ENCODE measurements at regions of chr2 and their contacts with region 1.

Region 1: DNA sequence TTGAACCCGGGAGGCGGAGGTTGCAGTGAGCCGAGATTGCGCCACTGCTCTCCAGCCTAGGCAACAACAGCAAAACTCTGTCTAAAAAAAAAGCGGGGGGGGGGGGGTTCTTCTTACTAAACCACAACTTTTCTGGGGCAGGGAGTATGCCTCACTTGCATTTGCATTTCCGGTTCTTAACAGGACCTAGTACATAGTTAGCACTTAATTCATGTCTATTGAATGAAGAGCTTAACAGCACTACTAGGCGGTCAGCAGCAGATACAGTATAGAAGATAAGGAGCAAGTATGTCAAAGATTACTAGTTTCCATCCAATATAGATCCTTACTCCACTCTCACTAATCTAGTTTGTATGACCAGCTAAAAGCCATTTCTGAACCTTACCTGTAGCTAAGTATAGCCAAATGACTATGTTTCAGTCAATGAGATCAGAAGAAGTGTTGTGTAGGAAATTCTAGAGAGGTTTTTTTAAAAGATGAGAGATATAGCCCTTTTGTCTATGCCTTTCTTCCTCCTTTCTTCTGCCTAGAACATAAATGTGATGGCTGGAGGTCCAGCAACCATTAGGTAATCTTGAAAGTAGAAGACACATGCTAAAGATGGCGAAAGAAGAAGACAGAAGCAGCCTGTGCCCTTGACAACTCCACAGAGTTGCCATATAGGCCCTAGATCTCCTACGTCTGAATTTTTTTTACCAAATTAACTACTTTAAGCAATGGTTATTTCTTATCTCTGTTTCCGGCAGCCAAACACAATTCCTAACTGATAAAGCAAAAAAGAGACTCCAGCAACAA is 11.3 kb downstream of the HYCC2 start:
- DNase-seq: no peak
- H3K4me3 ChIP-seq: no peak overlapping the region
- H3K27ac ChIP-seq: no peak overlapping the region
- H3K4me1 ChIP-seq: no peaks in the 10 kb centered on the region
- H3K27me3 ChIP-seq: no peaks in the 10 kb centered on the region
- CTCF ChIP-seq: no peak
- EP300 ChIP-seq: no peak
- POLR2A ChIP-seq: no peak

Region 2: DNA sequence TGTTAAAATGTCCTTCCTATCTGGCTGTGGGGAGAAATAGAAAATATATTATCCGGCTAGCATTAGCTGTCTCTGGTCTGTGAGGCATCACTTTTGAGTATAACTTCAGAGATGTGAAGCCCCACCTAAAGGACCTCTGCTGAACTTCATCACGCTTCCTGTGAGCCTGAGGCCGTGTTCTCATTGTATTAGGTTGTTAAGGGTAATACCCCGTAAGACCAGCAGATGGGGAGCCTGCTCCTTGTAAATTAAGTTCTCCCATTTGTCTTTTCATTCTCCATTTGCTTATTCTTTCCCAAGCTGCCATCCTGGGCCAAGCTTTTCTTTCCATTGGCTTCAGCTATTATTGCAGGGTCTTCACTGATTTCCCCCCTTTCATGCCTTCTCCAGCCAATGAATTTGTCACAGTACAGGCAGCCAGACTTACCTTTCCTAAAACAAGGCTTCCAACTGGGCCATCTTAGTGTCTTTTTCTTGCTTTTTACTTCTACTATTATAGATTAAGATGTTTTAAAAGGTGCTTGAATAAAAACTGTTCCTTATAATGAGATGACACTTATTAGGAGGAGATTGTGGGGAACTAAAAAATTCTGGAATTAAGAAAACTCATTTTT is 158.6 kb before region 1 on chr2:
- intact Hi-C with region 1: loop called in 1 of 4 experiments (anchors 10 kb)
- DNase-seq: peak in 2 of 5 donors; percentile 25 to 59
- H3K4me3 ChIP-seq: no peak overlapping the region
- H3K27ac ChIP-seq: no peak overlapping the region
- H3K4me1 ChIP-seq: no peaks in the 10 kb centered on the region
- H3K27me3 ChIP-seq: no peaks in the 10 kb centered on the region
- CTCF ChIP-seq: peak; percentile 25 to 60 (median 55)
- EP300 ChIP-seq: no peak
- POLR2A ChIP-seq: no peak

Region 3: GRCh38 chr2:200963124-200963917 is 96.8 kb before region 1 on chr2 and contains the start of gene ORC2:
- intact Hi-C with region 1: loop called in 1 of 4 experiments (anchors 10 kb)
- DNase-seq: peak; percentile 95 to 98 (median 96)
- H3K4me3 ChIP-seq: peak within 1 kb of the TSS; percentile 68
- H3K27ac ChIP-seq: peak within 1 kb of the TSS; percentile 11 to 69
- H3K4me1 ChIP-seq: peaks cover 1% of the 10 kb centered on the region
- H3K27me3 ChIP-seq: no peaks in the 10 kb centered on the region
- CTCF ChIP-seq: peak; percentile 36 to 83 (median 56)
- EP300 ChIP-seq: no peak
- POLR2A ChIP-seq: no peak
- total RNA-seq, gene ORC2: 12.8 to 31.4 (median 29.0) TPM